Uterus (tissue), 4 donors: ENCODE measurements at regions of chr10 and their contacts with region 1.

Region 1: GRCh38 chr10:103481974-103482531 is 3.0 kb upstream of the CALHM3 start:
- DNase-seq: no peak
- H3K4me3 ChIP-seq: no peak overlapping the region
- H3K27ac ChIP-seq: peak overlapping the region in 1 of 2 donors; percentile 17
- H3K4me1 ChIP-seq: peaks cover 0 to 4% of the 10 kb centered on the region in 2 donors
- H3K27me3 ChIP-seq: no peaks in the 10 kb centered on the region
- CTCF ChIP-seq: peak; percentile 56 to 78 (median 61)
- POLR2A ChIP-seq: no peak

Region 2: GRCh38 chr10:103416436-103417147 is 65.5 kb before region 1 on chr10:
- intact Hi-C with region 1: loop called (anchors 5 kb)
- DNase-seq: peak; percentile 68 to 87
- H3K4me3 ChIP-seq: no peak overlapping the region
- H3K27ac ChIP-seq: no peak overlapping the region
- H3K4me1 ChIP-seq: no peaks in the 10 kb centered on the region
- H3K27me3 ChIP-seq: no peaks in the 10 kb centered on the region
- CTCF ChIP-seq: peak; percentile 79 to 87 (median 84)
- POLR2A ChIP-seq: no peak

Region 3: GRCh38 chr10:103685880-103686669 is 204.0 kb after region 1 on chr10:
- intact Hi-C with region 1: loop called (anchors 10 kb)
- DNase-seq: peak; percentile 91 to 92
- H3K4me3 ChIP-seq: no peak overlapping the region
- H3K27ac ChIP-seq: peak overlapping the region; percentile 81 to 87
- H3K4me1 ChIP-seq: no peaks in the 10 kb centered on the region
- H3K27me3 ChIP-seq: no peaks in the 10 kb centered on the region
- CTCF ChIP-seq: peak; percentile 94 to 97 (median 96)
- POLR2A ChIP-seq: no peak

Region 4: DNA sequence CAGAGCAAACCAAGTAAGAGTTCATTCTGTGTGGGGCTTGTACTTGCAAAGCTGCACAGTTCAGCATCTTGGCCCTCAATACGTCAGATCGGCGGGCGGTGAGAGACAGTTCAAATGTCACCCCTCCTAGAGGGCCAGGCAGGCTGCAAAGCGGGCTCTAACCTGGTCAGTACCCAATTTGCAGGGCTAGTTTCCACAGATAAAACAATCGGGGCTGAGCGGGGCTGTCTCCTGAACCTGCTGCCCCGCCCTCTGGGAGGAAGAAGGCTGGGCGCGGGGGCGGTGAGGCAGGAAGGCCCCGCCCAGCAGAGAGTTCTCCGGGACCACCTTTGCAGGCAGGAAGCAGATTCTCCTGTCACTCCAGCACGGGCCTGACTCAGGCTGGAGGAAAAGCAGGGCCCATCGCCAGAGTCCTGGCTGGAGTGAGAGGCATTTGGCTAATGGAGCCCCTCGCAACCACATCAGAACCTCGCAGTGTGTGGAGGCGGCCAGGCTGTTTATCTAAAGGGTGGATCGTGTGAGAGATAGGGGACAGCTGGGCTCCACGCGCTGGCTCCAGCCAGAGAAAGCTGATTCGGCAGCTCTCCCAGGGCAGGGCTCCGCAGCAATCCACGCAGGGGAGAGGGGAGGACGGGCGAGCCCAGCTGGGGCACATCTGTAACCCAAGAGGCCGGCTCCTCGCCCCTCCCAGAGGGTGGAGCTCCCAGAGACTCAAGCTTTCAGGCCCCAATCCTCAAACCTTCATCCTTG is 290.2 kb after region 1 on chr10:
- intact Hi-C with region 1: no loop called
- DNase-seq: peak; percentile 88 to 90
- H3K4me3 ChIP-seq: peak overlapping the region; percentile 25 to 27
- H3K27ac ChIP-seq: peak overlapping the region; percentile 84
- H3K4me1 ChIP-seq: peaks cover 0 to 10% of the 10 kb centered on the region in 2 donors
- H3K27me3 ChIP-seq: no peaks in the 10 kb centered on the region
- CTCF ChIP-seq: no peak
- POLR2A ChIP-seq: peak; percentile 31 to 46